Activated naive CD4-positive, alpha-beta T cell treated with anti-CD3 and anti-CD28 coated beads, Interleukin-2, amount 10 ng/mL, durations not matched to agents 7 days and 5 days (primary cell): ENCODE measurements at regions of chr12 and their contacts with region 1.

Region 1: GRCh38 chr12:50111693-50112455 is at the start of gene COX14:
- DNase-seq: peak; percentile 99
- H3K4me3 Mint-ChIP-seq: peak within 1 kb of the TSS; percentile 93
- H3K27ac Mint-ChIP-seq: peak within 1 kb of the TSS; percentile 98
- H3K4me1 Mint-ChIP-seq: peaks cover 42% of the 10 kb centered on the region
- H3K27me3 Mint-ChIP-seq: peaks cover 4% of the 10 kb centered on the region

Region 2: DNA sequence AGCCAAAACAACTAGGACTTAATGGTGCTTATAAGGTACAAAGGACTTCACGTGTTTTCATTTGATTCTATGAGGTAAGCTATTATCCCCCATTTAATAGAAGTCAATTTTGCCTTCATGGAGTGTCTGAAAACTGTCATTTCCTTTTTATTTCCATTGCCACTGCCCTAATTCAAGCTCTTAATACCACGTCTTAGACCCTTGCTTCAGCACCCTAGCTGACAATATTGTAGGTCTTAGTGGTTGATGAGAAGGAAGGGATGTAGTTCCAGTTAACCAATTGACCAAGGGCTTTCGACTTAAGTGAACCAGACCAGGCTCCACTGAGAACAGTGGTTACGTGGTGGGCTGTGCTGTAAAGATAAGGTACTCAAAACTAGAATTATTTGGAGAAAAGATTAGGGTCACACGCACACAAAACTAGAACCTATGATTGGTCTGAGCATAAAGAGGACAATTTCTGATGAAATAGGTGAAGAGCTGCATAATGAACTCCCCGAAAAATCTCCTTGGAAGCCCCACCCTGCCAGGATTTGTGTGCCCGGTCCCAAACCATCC is 64.1 kb before region 1 on chr12:
- CTCF ChIA-PET with region 1: no interaction called
- DNase-seq: no peak
- H3K4me3 Mint-ChIP-seq: no peak overlapping the region
- H3K27ac Mint-ChIP-seq: no peak overlapping the region
- H3K4me1 Mint-ChIP-seq: peaks cover 2% of the 10 kb centered on the region
- H3K27me3 Mint-ChIP-seq: peaks cover 49% of the 10 kb centered on the region

Region 3: GRCh38 chr12:50084775-50085614 is 26.9 kb before region 1 on chr12 and contains the start of gene SMARCD1:
- CTCF ChIA-PET with region 1: interaction called, 40 read pairs
- DNase-seq: peak; percentile 88
- H3K4me3 Mint-ChIP-seq: peak within 1 kb of the TSS; percentile 92
- H3K27ac Mint-ChIP-seq: peak within 1 kb of the TSS; percentile 95
- H3K4me1 Mint-ChIP-seq: peaks cover 30% of the 10 kb centered on the region
- H3K27me3 Mint-ChIP-seq: peaks cover 6% of the 10 kb centered on the region

Region 4: DNA sequence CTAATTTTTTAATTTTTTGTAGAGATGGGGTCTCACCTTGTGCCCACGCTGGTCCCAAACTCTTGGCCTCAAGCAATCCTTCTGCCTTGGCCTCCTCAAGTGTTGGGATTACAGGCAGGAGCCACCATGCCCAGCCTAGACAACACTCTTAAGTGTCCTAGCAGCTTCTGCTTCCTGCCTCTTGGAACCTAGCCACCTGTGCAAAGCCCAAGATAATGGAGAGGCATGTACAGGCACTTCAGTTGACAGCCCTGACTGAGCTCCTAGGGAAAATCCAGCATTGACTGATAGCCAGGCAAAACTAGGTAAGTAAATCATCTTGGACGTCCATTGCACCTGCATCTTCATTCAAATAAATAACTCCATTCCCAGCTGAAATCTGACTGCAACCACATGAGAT is 15.7 kb after region 1 on chr12:
- CTCF ChIA-PET with region 1: interaction called, 19 read pairs
- DNase-seq: no peak
- H3K4me3 Mint-ChIP-seq: no peak overlapping the region
- H3K27ac Mint-ChIP-seq: no peak overlapping the region
- H3K4me1 Mint-ChIP-seq: peaks cover 17% of the 10 kb centered on the region
- H3K27me3 Mint-ChIP-seq: no peaks in the 10 kb centered on the region

Region 5: DNA sequence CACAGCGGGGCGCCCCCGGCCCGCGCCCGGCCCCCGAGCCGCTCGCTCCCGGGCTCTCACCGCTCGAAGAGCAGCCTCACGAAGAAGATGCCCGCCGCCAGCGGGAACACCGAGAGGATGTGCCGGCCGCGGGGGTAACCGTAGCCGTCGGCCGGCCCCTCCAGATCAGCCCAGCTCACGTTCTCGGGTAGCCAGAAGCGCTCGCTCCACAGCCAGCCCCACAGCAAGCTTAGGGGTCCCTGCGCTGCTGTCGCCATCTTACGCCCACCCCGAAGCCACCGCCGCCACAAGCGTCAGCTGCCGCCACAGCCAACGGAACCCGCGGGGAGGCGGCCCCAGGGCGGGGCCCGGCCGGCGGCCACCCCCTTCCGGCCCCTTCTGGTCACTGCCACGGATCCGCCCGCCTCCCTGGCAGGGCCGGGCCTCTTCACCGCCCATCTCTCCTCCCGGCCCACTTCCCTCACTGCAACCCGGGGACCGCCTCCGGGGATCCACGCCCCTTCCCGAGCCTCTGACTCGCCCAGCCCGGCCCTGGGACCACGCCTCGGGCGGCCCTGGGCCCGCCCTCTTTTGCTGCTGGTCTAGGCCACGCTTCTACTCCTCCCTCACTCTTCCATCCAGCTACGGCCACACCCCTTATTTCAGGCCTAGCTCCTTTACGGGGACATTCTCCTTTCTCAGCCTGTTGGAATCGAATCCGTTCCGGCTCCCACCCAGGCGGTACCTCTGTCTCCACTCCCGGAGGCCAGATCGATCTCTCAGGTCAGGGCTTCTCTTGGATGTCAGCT is 55.4 kb after region 1 on chr12 and contains the start of gene CERS5:
- CTCF ChIA-PET with region 1: interaction called, 19 read pairs
- DNase-seq: peak; percentile 99
- H3K4me3 Mint-ChIP-seq: peak within 1 kb of the TSS; percentile 95
- H3K27ac Mint-ChIP-seq: peak within 1 kb of the TSS; percentile 90
- H3K4me1 Mint-ChIP-seq: peaks cover 37% of the 10 kb centered on the region
- H3K27me3 Mint-ChIP-seq: no peaks in the 10 kb centered on the region

Region 6: DNA sequence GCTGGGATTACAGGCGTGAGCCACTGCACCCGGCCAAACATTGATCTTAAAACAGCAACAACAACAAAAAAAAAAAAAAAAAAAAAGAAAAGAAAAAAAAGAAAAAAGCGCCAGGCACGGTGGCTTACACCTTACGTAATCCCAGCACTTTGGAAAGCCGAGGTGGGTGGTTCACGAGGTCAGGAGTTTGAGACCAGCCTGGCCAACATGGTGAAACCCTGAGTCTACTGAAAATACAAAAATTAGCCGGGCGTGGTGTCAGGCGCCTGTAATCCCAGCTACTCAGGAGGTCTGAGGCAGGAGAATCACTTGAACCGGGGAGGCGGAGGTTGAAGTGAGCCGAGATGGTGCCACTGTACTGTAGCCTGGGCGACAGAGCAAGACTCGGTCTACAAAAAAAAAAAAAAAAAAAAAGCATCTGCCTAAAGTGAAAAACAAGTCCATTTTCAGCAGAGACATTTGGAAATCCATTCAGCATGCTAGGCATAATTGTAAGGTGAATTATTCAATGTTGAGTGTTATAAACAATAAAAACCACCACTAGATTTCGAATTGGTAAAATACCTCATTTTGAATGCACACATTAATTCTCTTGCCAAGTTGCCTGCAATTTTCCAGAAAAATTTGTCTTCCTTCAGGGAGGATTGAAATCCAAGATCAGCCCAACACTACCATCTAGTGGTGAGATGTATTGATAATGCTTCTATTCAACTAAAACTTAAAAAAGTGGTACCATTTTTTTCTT is 63.3 kb after region 1 on chr12:
- CTCF ChIA-PET with region 1: interaction called, 37 read pairs
- DNase-seq: no peak
- H3K4me3 Mint-ChIP-seq: no peak overlapping the region
- H3K27ac Mint-ChIP-seq: peak overlapping the region; percentile 4
- H3K4me1 Mint-ChIP-seq: peaks cover 1% of the 10 kb centered on the region
- H3K27me3 Mint-ChIP-seq: no peaks in the 10 kb centered on the region

Region 7: GRCh38 chr12:50222275-50222795 is 110.5 kb after region 1 on chr12:
- CTCF ChIA-PET with region 1: interaction called, 14 read pairs
- DNase-seq: peak; percentile 47
- H3K4me3 Mint-ChIP-seq: no peak overlapping the region
- H3K27ac Mint-ChIP-seq: no peak overlapping the region
- H3K4me1 Mint-ChIP-seq: peaks cover 26% of the 10 kb centered on the region
- H3K27me3 Mint-ChIP-seq: no peaks in the 10 kb centered on the region